ENCODE measurements at regions of chr1 and their contacts with region 1.

Region 1: DNA sequence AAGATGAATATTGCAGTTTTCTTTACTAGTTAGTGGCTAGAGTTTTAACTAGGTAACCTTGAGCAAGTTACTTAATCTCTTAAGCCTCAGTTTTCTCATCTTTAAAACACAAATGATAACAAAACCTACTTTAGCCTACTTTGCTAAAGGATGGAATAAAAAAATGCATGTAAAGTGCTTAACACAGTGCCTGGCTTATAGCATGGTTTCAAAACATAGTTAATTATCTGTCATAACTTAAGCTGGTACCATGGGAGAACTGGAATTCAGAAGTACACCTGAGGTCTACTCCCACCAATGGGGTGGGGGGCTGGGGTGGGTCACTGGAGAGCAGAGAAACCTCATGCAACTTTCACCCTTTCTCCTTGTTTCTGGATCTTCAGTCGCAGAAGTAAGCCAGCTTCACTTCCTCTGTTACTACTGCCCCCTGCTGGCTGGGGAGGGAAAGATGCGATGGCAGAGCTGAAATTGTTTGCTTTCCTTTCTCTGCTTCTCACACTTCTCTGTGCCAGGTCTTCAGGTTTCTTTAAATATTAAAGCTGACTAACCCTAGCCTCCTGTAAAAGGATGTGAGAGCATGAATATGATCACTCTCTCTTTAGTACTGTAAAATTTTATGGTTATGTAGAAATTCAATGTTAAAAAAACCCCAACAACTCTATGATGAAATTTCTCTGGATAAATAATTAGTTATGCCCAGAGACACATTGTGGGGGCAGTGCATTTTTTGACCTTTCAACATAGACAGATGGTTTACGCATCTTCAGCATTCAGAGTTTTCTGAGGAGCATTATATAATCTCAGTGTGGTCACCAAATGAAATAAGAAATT is 324.2 kb downstream of the HLX start:
- DNase-seq: peak; percentile 63 to 76 (median 71)
- ATAC-seq: peak; percentile 72
- H3K4me3 ChIP-seq: no peak overlapping the region
- H3K27ac ChIP-seq: no peak overlapping the region
- H3K4me1 ChIP-seq: no peaks in the 10 kb centered on the region
- H3K27me3 ChIP-seq: no peaks in the 10 kb centered on the region
- CTCF ChIP-seq: peak; percentile 66 to 79 (median 73)
- EP300 ChIP-seq: no peak
- POLR2A ChIP-seq: no peak
- RAD21 ChIP-seq: peak; percentile 74 to 82

Region 2: DNA sequence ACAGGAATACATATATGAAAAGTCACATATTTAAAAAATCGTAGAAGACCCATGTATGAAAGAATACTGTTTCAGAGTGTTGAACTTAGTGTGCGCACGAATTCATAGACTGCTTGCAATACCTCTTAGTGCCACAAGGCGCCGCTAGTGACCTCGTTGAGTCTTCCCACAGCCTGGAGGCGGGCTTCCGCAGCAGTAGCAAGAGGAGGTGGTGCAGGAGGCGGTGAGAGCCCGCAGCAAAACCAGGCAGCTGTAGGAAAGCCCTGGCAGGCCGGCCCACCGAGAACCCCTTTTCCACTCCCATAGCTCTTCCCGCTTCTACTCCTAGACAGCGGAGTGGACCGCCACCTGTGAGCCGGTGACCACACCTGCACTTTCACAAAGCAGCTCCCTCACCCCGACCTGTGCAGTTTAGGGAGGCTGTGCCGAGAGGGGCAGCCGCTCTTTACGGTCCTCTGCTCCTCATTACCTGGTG is 393.2 kb before region 1 on chr1:
- CTCF ChIA-PET with region 1: no interaction called
- POLR2A ChIA-PET with region 1: no interaction called
- in situ Hi-C with region 1: loop called (anchors 10 kb)
- intact Hi-C with region 1: loop called (anchors 1 kb)
- DNase-seq: peak; percentile 74 to 86 (median 82)
- ATAC-seq: peak; percentile 93
- H3K4me3 ChIP-seq: no peak overlapping the region
- H3K27ac ChIP-seq: no peak overlapping the region
- H3K4me1 ChIP-seq: peaks cover 2 to 4% of the 10 kb centered on the region in 2 experiments; a peak in 3 of 5 replicates
- H3K27me3 ChIP-seq: peaks cover 2 to 20% of the 10 kb centered on the region in 2 experiments; a peak in 3 of 5 replicates
- CTCF ChIP-seq: peak; percentile 91 to 95 (median 92)
- EP300 ChIP-seq: no peak
- POLR2A ChIP-seq: no peak
- RAD21 ChIP-seq: peak; percentile 69 to 80

Region 3: GRCh38 chr1:220873868-220874655 is 329.4 kb before region 1 on chr1:
- CTCF ChIA-PET with region 1: interaction called, 11 read pairs
- POLR2A ChIA-PET with region 1: no interaction called
- in situ Hi-C with region 1: loop called (anchors 5 kb)
- intact Hi-C with region 1: loop called (anchors 1 kb)
- DNase-seq: peak; percentile 44 to 58 (median 54)
- ATAC-seq: peak; percentile 72
- H3K4me3 ChIP-seq: no peak overlapping the region
- H3K27ac ChIP-seq: no peak overlapping the region
- H3K4me1 ChIP-seq: peaks cover 0 to 9% of the 10 kb centered on the region in 2 experiments; a peak in 1 of 5 replicates
- H3K27me3 ChIP-seq: peaks cover 5 to 14% of the 10 kb centered on the region in 2 experiments; a peak in 2 of 5 replicates
- CTCF ChIP-seq: peak; percentile 65 to 75 (median 71)
- EP300 ChIP-seq: no peak
- POLR2A ChIP-seq: no peak
- RAD21 ChIP-seq: peak; percentile 83 to 87

Region 4: DNA sequence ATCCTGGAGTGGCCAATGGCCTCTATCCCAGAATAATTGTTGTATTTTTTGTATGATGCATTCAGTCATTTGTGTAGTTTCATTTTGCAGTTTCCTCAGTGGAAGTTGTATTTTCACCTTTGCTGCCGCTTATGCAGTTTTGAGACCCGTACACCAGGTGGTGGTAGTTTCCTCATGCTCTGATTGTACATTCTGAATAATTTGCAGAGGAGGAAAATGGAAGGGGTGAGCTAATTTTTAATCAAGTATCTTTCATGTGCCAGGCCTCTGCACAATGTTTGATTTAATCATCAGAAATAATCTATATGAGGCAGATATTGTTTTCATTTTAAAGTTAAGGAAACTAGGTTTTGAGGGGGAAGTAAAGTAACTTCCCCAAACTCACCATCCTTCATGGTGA is 294.7 kb before region 1 on chr1:
- CTCF ChIA-PET with region 1: interaction called, 4 read pairs
- POLR2A ChIA-PET with region 1: no interaction called
- in situ Hi-C with region 1: no loop called
- intact Hi-C with region 1: loop called (anchors 1 kb)
- DNase-seq: peak in 2 of 4 experiments; percentile 36 to 37
- ATAC-seq: peak; percentile 60; the same call in 2 of the 3 replicates
- H3K4me3 ChIP-seq: no peak overlapping the region
- H3K27ac ChIP-seq: no peak overlapping the region
- H3K4me1 ChIP-seq: no peaks in the 10 kb centered on the region
- H3K27me3 ChIP-seq: peaks cover 0 to 11% of the 10 kb centered on the region in 2 experiments; a peak in 2 of 5 replicates
- CTCF ChIP-seq: peak; percentile 38 to 63 (median 43); a peak in 4 of 6 replicates
- EP300 ChIP-seq: no peak
- POLR2A ChIP-seq: no peak
- RAD21 ChIP-seq: peak; percentile 72 to 74

Region 5: GRCh38 chr1:220990427-220991339 is 212.8 kb before region 1 on chr1:
- CTCF ChIA-PET with region 1: no interaction called
- POLR2A ChIA-PET with region 1: no interaction called
- in situ Hi-C with region 1: no loop called
- intact Hi-C with region 1: loop called (anchors 5 kb)
- DNase-seq: peak; percentile 27 to 63 (median 32)
- ATAC-seq: peak; percentile 69
- H3K4me3 ChIP-seq: no peak overlapping the region
- H3K27ac ChIP-seq: no peak overlapping the region
- H3K4me1 ChIP-seq: no peaks in the 10 kb centered on the region; a peak in 1 of 5 replicates
- H3K27me3 ChIP-seq: no peaks in the 10 kb centered on the region
- CTCF ChIP-seq: peak; percentile 14 to 30 (median 21); a peak in 3 of 6 replicates
- EP300 ChIP-seq: peak; percentile 36; the same call in 1 of the 2 replicates
- POLR2A ChIP-seq: no peak
- RAD21 ChIP-seq: no peak

Measured in K562 (cell line).